ENCODE measurements at regions of chr3 and their contacts with region 1.

Region 1: DNA sequence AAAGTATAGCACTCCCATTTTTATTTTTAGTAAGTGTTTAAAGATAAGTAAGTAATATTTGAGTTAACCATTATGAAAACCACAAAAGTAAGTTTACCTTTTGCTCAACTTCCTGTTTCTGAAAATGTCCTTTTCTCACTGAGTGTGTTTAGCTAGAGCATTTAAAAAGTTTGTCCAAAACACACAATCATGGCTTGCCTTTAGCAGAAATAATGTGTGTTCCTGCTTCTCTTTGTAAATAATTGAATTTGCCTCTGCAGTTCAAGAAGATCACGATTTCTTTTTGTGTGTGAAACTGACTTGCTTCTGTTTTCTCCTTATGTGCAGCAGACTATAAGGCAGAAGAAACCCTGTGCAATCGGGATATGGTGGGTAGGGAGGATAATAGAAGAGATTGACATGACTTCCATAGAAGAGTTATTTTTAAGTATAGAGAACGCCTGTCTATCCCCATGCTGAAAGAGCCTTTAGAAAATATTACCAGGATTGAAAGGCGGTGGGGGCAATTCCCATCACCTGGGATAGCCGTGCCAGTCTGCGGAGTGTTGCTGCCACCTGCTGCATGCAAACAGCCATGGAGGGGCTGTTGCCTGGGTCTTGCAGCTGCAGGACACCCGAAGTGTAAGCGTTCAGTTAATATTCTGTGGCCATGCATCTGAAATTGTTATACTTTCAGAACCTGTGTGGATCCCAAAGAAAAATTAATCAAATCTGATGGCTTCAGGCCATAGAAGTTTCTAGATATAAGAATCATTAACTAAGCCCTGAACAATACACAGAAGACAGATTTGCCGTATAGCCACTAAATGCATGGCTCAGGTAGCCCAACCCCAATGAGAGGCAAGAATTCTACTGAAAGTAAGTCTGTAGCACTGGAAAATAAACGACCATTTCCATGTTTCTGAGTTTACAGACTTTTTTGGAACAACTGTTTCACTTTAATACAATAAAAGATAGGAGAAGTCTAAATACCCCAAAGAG is 2.4 kb upstream of the CD96 start:
- DNase-seq: peak; percentile 80
- ATAC-seq: peak; percentile 59
- H3K4me3 Mint-ChIP-seq: peak overlapping the region; percentile 67
- H3K27ac Mint-ChIP-seq: peak overlapping the region; percentile 99
- H3K4me1 Mint-ChIP-seq: peaks cover 57% of the 10 kb centered on the region
- H3K27me3 Mint-ChIP-seq: no peaks in the 10 kb centered on the region

Region 2: GRCh38 chr3:111594205-111594604 is 54.6 kb after region 1 on chr3:
- CTCF ChIA-PET with region 1: interaction called, 8 read pairs
- POLR2A ChIA-PET with region 1: interaction called, 12 read pairs
- DNase-seq: no peak
- ATAC-seq: peak; percentile 48
- H3K4me3 Mint-ChIP-seq: peak overlapping the region; percentile 29
- H3K27ac Mint-ChIP-seq: peak overlapping the region; percentile 79
- H3K4me1 Mint-ChIP-seq: peaks cover 72% of the 10 kb centered on the region
- H3K27me3 Mint-ChIP-seq: no peaks in the 10 kb centered on the region

Region 3: GRCh38 chr3:111691293-111691909 is 151.8 kb after region 1 on chr3:
- CTCF ChIA-PET with region 1: interaction called, 15 read pairs
- POLR2A ChIA-PET with region 1: no interaction called
- DNase-seq: no peak
- ATAC-seq: no peak
- H3K4me3 Mint-ChIP-seq: no peak overlapping the region
- H3K27ac Mint-ChIP-seq: peak overlapping the region; percentile 53
- H3K4me1 Mint-ChIP-seq: peaks cover 68% of the 10 kb centered on the region
- H3K27me3 Mint-ChIP-seq: no peaks in the 10 kb centered on the region

Measured in activated CD8-positive, alpha-beta T cell treated with anti-CD3 and anti-CD28 coated beads, Interleukin-2, amount 10 ng/mL, durations not matched to agents 7 days and 5 days (primary cell).